Sigmoid colon (tissue), 7 donors: ENCODE measurements at regions of chr6 and their contacts with region 1.

Region 1: GRCh38 chr6:156776840-156777576 is at the start of gene ARID1B:
- DNase-seq: peak; percentile 93
- H3K4me3 ChIP-seq: peak within 1 kb of the TSS; percentile 91 to 94 (median 92)
- H3K27ac ChIP-seq: peak within 1 kb of the TSS; percentile 97 to 99 (median 98)
- H3K4me1 ChIP-seq: peaks cover 3 to 38% (median 32%) of the 10 kb centered on the region in 4 donors
- H3K27me3 ChIP-seq: no peaks in the 10 kb centered on the region
- CTCF ChIP-seq: no peak
- EP300 ChIP-seq: no peak
- POLR2A ChIP-seq: peak in 1 of 2 donors; percentile 75
- total RNA-seq, gene ARID1B: 69.6 to 115 (median 78.8) TPM

Region 2: DNA sequence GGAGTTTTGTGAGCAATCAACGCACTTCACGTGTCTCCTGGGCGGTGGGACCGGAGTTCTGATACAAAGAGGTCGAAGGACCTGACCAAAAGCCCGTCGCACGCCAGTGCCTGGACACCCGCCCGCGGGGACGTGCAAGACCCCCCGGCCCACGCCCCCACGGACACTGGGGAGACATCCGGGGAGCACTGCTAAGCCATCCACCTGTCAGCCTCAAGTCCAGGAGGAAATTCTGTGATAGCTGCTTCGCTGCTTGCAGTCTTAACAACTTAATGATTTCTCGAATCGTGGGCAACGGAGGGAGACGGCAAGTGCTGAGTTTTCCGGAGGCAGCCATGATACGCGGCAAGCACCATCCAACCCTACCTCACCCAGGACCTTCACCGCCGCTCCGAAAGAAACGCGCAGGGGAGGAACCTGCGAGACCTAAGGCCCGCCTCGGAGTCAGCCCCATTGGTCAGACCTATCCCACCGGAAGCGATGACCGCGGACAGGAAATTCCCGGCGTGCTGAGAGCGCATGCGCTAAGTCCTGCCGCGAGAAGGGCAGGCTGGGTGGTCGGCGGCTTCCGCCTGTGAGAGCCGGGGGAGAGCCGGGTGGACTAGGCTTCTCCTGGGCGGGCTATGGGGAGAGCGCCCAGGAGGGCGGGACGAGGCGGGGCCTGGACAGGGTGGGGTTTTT is 1462.8 kb before region 1 on chr6 and contains the start of gene TFB1M:
- intact Hi-C with region 1: loop called (anchors 5 kb)
- DNase-seq: peak; percentile 99
- H3K4me3 ChIP-seq: peak within 1 kb of the TSS; percentile 59 to 83 (median 76)
- H3K27ac ChIP-seq: peak within 1 kb of the TSS; percentile 83 to 91 (median 88)
- H3K4me1 ChIP-seq: peaks cover 0 to 20% (median 4%) of the 10 kb centered on the region in 4 donors
- H3K27me3 ChIP-seq: no peaks in the 10 kb centered on the region
- CTCF ChIP-seq: no peak
- EP300 ChIP-seq: peak in 2 of 4 donors; percentile 9 to 17
- POLR2A ChIP-seq: peak; percentile 56 to 73
- total RNA-seq, gene TFB1M: 10.7 to 22.2 (median 16.8) TPM

Region 3: GRCh38 chr6:156502969-156503504 is 274.0 kb before region 1 on chr6:
- intact Hi-C with region 1: no loop called
- DNase-seq: no peak
- H3K4me3 ChIP-seq: no peak overlapping the region
- H3K27ac ChIP-seq: no peak overlapping the region
- H3K4me1 ChIP-seq: no peaks in the 10 kb centered on the region
- H3K27me3 ChIP-seq: no peaks in the 10 kb centered on the region
- CTCF ChIP-seq: no peak
- EP300 ChIP-seq: no peak
- POLR2A ChIP-seq: no peak

Region 4: GRCh38 chr6:156686995-156687788 is 89.8 kb before region 1 on chr6:
- intact Hi-C with region 1: loop called (anchors 1 kb)
- DNase-seq: peak; percentile 97
- H3K4me3 ChIP-seq: peak overlapping the region; percentile 60 to 76 (median 71)
- H3K27ac ChIP-seq: peak overlapping the region; percentile 94 to 99 (median 96)
- H3K4me1 ChIP-seq: peaks cover 0 to 16% (median 10%) of the 10 kb centered on the region in 4 donors
- H3K27me3 ChIP-seq: no peaks in the 10 kb centered on the region
- CTCF ChIP-seq: no peak
- EP300 ChIP-seq: peak in 1 of 4 donors; percentile 28
- POLR2A ChIP-seq: peak; percentile 84 to 89

Region 5: GRCh38 chr6:156703719-156704118 is 73.3 kb before region 1 on chr6:
- intact Hi-C with region 1: no loop called
- DNase-seq: no peak
- H3K4me3 ChIP-seq: no peak overlapping the region
- H3K27ac ChIP-seq: no peak overlapping the region
- H3K4me1 ChIP-seq: no peaks in the 10 kb centered on the region
- H3K27me3 ChIP-seq: no peaks in the 10 kb centered on the region
- CTCF ChIP-seq: no peak
- EP300 ChIP-seq: no peak
- POLR2A ChIP-seq: no peak

Region 6: DNA sequence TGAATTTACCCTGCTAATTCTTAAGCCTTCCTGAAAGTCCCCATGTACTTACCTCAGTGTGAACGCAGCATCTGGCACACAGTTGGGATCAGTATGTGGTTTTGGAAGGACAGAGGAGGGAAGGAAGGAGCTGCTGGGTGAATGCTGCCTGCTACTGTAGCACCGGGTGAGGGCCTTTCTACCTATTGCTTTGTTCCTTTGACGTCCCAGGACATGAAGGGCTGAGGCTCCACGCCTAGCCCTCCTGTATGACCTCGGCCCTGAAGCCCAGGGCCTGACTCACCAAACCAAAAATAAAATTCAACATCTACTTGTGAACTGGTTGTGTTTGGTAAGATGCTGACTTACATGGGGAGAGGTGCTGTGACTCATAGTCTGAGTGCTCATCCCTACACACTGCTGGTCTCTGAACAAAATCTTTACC is 51.3 kb after region 1 on chr6:
- intact Hi-C with region 1: loop called (anchors 5 kb)
- DNase-seq: no peak
- H3K4me3 ChIP-seq: no peak overlapping the region
- H3K27ac ChIP-seq: peak overlapping the region; percentile 45 to 76 (median 60)
- H3K4me1 ChIP-seq: peaks cover 0 to 75% (median 50%) of the 10 kb centered on the region in 4 donors
- H3K27me3 ChIP-seq: no peaks in the 10 kb centered on the region
- CTCF ChIP-seq: no peak
- EP300 ChIP-seq: no peak
- POLR2A ChIP-seq: no peak

Region 7: DNA sequence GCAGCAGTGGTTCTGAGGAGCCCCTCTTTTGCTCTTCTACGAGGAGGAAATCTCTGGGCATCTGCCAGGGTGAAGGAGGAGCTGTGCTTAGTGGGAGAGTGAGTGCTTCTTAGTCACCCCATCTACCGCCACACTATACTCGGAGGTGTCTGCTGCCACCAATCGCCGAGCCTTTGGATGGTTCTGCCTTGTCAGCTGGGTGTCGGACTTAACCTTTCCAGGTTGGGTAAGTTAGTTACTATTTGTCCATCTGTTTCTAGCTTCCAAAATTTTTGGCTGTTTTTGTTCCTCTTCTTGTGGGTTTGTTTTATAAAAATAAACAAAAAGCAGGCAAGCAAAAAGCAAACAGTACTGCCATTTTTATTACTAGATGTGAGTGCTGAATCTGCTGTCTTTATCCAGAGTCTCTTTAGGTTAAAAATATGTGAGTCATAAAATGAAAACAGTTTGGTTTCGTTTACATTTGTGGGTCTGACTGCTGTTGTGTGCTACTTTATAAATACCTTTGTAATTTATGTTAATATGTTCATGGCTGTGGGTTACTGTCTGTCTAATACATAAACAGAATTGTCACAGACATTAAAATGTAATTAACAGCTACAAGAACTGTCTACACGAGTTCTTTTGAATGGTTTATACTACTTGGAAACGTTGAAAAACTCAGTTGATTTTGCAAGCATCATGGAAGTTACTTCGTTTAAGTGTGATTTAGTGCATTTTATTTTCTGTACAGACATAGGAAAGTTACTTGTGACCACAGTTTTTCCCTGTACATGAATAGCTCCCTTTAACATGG is 89.4 kb after region 1 on chr6:
- intact Hi-C with region 1: no loop called
- DNase-seq: peak; percentile 58
- H3K4me3 ChIP-seq: no peak overlapping the region
- H3K27ac ChIP-seq: peak overlapping the region in 2 of 4 donors; percentile 31 to 38
- H3K4me1 ChIP-seq: peaks cover 0 to 43% (median 37%) of the 10 kb centered on the region in 4 donors
- H3K27me3 ChIP-seq: no peaks in the 10 kb centered on the region
- CTCF ChIP-seq: no peak
- EP300 ChIP-seq: no peak
- POLR2A ChIP-seq: no peak

Region 8: DNA sequence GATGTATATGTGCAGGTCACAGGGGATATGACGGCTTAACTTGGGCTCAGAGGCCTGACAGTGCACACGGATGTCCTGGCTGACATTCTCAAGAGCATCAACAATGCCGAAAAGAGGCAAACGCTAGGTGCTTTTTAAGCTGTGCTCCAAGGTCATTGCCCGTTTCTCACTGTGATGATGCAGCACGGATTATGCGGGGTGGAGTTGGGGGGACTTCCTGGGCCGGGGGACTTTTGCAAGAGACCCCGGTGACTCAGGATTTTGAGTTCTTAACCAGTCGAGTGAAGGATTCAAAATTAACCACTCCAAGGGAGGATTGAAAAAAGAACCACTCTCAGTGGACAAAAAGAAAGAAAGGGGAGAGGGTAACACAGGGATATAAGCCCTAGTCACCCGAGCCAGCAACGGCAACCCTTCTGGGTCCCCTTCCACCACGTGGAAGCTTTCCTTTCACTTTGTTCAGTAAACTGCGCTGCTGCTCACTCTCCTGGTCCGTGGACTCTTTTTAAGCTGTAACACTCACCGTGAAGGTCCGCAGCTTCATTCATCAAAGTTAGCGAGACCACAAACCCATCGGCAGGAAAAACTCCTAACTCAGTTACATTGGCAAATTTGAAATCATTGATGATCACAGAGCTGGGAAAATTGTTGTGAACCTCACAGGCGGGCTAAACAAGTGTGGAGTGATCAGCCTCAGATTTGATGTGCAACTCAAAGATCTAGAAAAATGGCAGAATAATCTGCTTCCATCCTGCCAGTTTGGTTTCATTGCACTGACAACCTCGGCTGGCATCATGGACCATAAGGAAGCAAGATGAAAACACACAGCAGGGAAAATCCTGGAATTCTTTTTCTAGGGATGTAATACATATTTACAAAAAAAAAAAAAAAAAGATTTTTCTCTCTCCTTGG is 199.5 kb after region 1 on chr6:
- intact Hi-C with region 1: loop called (anchors 2 kb)
- DNase-seq: peak; percentile 63
- H3K4me3 ChIP-seq: peak overlapping the region; percentile 26 to 47 (median 37)
- H3K27ac ChIP-seq: peak overlapping the region in 3 of 4 donors; percentile 24 to 65 (median 51)
- H3K4me1 ChIP-seq: peaks cover 0 to 62% (median 47%) of the 10 kb centered on the region in 4 donors
- H3K27me3 ChIP-seq: no peaks in the 10 kb centered on the region
- CTCF ChIP-seq: no peak
- EP300 ChIP-seq: no peak
- POLR2A ChIP-seq: no peak

Region 9: GRCh38 chr6:157107915-157108651 is 331.1 kb after region 1 on chr6:
- intact Hi-C with region 1: loop called (anchors 5 kb)
- DNase-seq: no peak
- H3K4me3 ChIP-seq: no peak overlapping the region
- H3K27ac ChIP-seq: peak overlapping the region; percentile 52 to 73 (median 72)
- H3K4me1 ChIP-seq: peaks cover 0 to 29% (median 20%) of the 10 kb centered on the region in 4 donors
- H3K27me3 ChIP-seq: no peaks in the 10 kb centered on the region
- CTCF ChIP-seq: no peak
- EP300 ChIP-seq: peak in 2 of 4 donors; percentile 26 to 39
- POLR2A ChIP-seq: no peak